Esophagus muscularis mucosa (tissue), 4 donors: ENCODE measurements at regions of chr4 and their contacts with region 1.

Region 1: DNA sequence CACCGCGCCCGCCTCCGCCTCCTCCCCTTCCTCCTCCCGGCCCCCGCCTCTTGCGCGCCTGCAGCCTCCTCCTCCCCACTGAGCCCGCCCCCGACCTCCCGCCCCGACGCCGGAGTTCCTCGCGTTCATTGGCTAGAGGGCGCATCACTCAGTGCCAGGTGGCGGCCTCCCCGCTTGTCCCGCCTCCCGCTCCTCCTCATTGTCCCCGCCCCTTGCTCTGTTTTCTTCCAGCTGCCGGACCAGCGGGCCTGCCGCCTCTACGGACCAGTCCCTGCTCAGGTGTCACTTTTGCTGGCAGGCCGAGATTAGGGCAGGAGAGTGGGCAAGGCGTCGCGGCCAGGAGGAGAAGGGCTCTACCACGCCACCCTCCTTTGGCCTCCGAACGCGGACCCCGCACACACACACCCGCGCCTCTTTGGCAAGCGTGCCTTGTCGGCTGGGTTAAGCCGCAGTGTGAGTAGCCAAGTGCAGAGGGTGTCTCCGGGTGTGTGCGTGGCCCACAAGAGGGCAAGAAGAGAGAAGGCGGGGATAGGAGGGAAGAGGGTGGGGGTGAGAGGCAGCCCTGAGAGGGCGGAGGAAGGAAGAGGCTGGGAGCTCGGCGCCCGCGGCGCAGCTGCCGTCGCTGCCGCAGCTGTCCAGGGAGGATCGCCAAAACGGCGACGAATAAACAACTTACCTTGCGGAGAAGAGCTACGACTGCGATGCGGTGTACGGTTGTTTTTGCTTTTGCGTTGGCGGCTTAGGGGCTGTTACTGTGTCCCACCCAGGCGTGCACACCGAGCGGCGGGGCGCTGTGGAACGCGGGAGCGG is 436 bp upstream of the PPP3CA start:
- DNase-seq: peak; percentile 100
- H3K4me3 ChIP-seq: peak overlapping the region; percentile 84 to 98 (median 90)
- H3K27ac ChIP-seq: peak overlapping the region; percentile 95 to 98 (median 96)
- H3K4me1 ChIP-seq: peaks cover 18 to 44% (median 42%) of the 10 kb centered on the region in 4 donors
- H3K27me3 ChIP-seq: no peaks in the 10 kb centered on the region
- CTCF ChIP-seq: no peak
- EP300 ChIP-seq: no peak
- POLR2A ChIP-seq: peak; percentile 32

Region 2: DNA sequence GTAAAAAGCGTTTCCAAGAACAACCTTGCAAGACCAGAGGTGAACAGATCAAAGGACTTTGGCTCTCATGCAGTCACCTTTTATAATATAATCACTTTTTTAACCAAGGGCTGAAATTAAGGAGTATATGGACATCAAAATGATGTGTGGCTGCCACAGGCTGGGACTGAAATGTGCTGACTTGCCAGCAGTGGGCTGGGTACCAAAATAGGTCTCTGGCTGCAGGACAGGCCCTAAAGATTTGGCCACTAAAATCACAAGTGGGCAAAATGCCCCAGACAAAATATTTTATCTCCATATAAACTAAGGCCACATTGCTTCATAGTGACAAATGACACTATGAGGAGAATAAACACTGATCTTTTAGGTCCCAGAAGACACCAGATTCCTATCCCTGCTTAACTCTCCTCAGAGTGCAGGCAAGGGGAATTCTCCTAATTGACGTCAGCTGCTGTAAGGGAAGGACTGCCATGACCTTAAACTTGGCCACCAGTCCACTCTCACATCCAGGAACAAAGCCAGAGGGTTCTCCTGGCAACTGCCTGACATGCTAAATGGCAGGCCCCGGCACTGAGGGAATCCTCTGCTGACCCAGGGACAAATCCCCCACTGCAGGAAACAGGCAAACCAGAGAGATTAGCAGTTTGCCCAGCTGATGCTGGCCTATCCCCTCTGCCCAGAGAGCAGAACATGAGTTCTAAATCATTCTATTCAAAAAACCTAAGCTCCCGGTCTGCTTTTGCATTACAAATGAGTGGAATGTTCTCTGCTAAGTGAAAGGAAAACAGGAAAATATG is 156.3 kb before region 1 on chr4:
- intact Hi-C with region 1: loop called (anchors 10 kb)
- DNase-seq: no peak
- H3K4me3 ChIP-seq: peak overlapping the region; percentile 8 to 28 (median 12)
- H3K27ac ChIP-seq: peak overlapping the region; percentile 72 to 85 (median 79)
- H3K4me1 ChIP-seq: peaks cover 22 to 49% (median 39%) of the 10 kb centered on the region in 4 donors
- H3K27me3 ChIP-seq: no peaks in the 10 kb centered on the region
- CTCF ChIP-seq: no peak
- EP300 ChIP-seq: peak; percentile 84
- POLR2A ChIP-seq: no peak

Region 3: GRCh38 chr4:101229116-101229515 is 118.6 kb before region 1 on chr4:
- intact Hi-C with region 1: loop called (anchors 5 kb)
- DNase-seq: no peak
- H3K4me3 ChIP-seq: no peak overlapping the region
- H3K27ac ChIP-seq: no peak overlapping the region
- H3K4me1 ChIP-seq: peaks cover 0 to 25% (median 24%) of the 10 kb centered on the region in 4 donors
- H3K27me3 ChIP-seq: no peaks in the 10 kb centered on the region
- CTCF ChIP-seq: no peak
- EP300 ChIP-seq: no peak
- POLR2A ChIP-seq: no peak

Region 4: GRCh38 chr4:101400096-101400495 is 52.3 kb after region 1 on chr4:
- intact Hi-C with region 1: no loop called
- DNase-seq: no peak
- H3K4me3 ChIP-seq: no peak overlapping the region
- H3K27ac ChIP-seq: no peak overlapping the region
- H3K4me1 ChIP-seq: no peaks in the 10 kb centered on the region
- H3K27me3 ChIP-seq: no peaks in the 10 kb centered on the region
- CTCF ChIP-seq: no peak
- EP300 ChIP-seq: no peak
- POLR2A ChIP-seq: no peak

Region 5: GRCh38 chr4:101500742-101501141 is 153.0 kb after region 1 on chr4:
- intact Hi-C with region 1: no loop called
- DNase-seq: no peak
- H3K4me3 ChIP-seq: no peak overlapping the region
- H3K27ac ChIP-seq: no peak overlapping the region
- H3K4me1 ChIP-seq: no peaks in the 10 kb centered on the region
- H3K27me3 ChIP-seq: no peaks in the 10 kb centered on the region
- CTCF ChIP-seq: no peak
- EP300 ChIP-seq: no peak
- POLR2A ChIP-seq: no peak